Heart left ventricle (tissue), 16 donors: ENCODE measurements at regions of chr15 and their contacts with region 1.

Region 1: GRCh38 chr15:73704869-73705645 is 20.9 kb downstream of the CD276 start:
- DNase-seq: peak; percentile 44 to 81 (median 67)
- ATAC-seq: peak; percentile 38 to 73 (median 58)
- H3K4me3 ChIP-seq: no peak overlapping the region
- H3K27ac ChIP-seq: no peak overlapping the region
- H3K4me1 ChIP-seq: peaks cover 0 to 7% (median 0%) of the 10 kb centered on the region in 12 donors
- H3K27me3 ChIP-seq: no peaks in the 10 kb centered on the region
- CTCF ChIP-seq: peak; percentile 65 to 87 (median 82)
- POLR2A ChIP-seq: no peak

Region 2: GRCh38 chr15:73240866-73241499 is 464.1 kb before region 1 on chr15:
- intact Hi-C with region 1: loop called in 1 of 10 experiments (anchors 5 kb)
- DNase-seq: peak; percentile 41 to 55 (median 49)
- ATAC-seq: no peak
- H3K4me3 ChIP-seq: no peak overlapping the region
- H3K27ac ChIP-seq: no peak overlapping the region
- H3K4me1 ChIP-seq: no peaks in the 10 kb centered on the region
- H3K27me3 ChIP-seq: no peaks in the 10 kb centered on the region
- CTCF ChIP-seq: peak; percentile 77 to 93 (median 89)
- POLR2A ChIP-seq: no peak

Region 3: GRCh38 chr15:73660455-73660854 is 44.6 kb before region 1 on chr15:
- intact Hi-C with region 1: loop called in 1 of 10 experiments (anchors 5 kb)
- DNase-seq: no peak
- ATAC-seq: no peak
- H3K4me3 ChIP-seq: no peak overlapping the region
- H3K27ac ChIP-seq: no peak overlapping the region
- H3K4me1 ChIP-seq: no peaks in the 10 kb centered on the region
- H3K27me3 ChIP-seq: peaks cover 0 to 6% (median 0%) of the 10 kb centered on the region in 9 donors
- CTCF ChIP-seq: no peak
- POLR2A ChIP-seq: no peak